ENCODE measurements at regions of chr20 and their contacts with region 1.

Region 1: GRCh38 chr20:36199345-36200257 is 36.7 kb upstream of the AAR2 start:
- DNase-seq: peak; percentile 85
- H3K4me3 ChIP-seq: no peak overlapping the region
- H3K27ac ChIP-seq: no peak overlapping the region
- H3K4me1 ChIP-seq: no peaks in the 10 kb centered on the region
- H3K27me3 ChIP-seq: no peaks in the 10 kb centered on the region
- CTCF ChIP-seq: peak; percentile 90

Region 2: GRCh38 chr20:35994994-35995453 is 204.6 kb before region 1 on chr20:
- intact Hi-C with region 1: loop called (anchors 5 kb)
- DNase-seq: peak; percentile 88
- H3K4me3 ChIP-seq: no peak overlapping the region
- H3K27ac ChIP-seq: no peak overlapping the region
- H3K4me1 ChIP-seq: no peaks in the 10 kb centered on the region
- H3K27me3 ChIP-seq: no peaks in the 10 kb centered on the region
- CTCF ChIP-seq: peak; percentile 93

Region 3: GRCh38 chr20:36093025-36093803 is 106.4 kb before region 1 on chr20:
- intact Hi-C with region 1: no loop called
- DNase-seq: peak; percentile 73
- H3K4me3 ChIP-seq: peak overlapping the region; percentile 69
- H3K27ac ChIP-seq: peak overlapping the region; percentile 86
- H3K4me1 ChIP-seq: peaks cover 18% of the 10 kb centered on the region
- H3K27me3 ChIP-seq: no peaks in the 10 kb centered on the region
- CTCF ChIP-seq: no peak

Region 4: GRCh38 chr20:36154700-36155628 is 44.6 kb before region 1 on chr20 and contains the start of gene EPB41L1:
- intact Hi-C with region 1: loop called (anchors 5 kb)
- DNase-seq: no peak
- H3K4me3 ChIP-seq: peak within 1 kb of the TSS; percentile 39
- H3K27ac ChIP-seq: no peak within 1 kb of the TSS
- H3K4me1 ChIP-seq: no peaks in the 10 kb centered on the region
- H3K27me3 ChIP-seq: no peaks in the 10 kb centered on the region
- CTCF ChIP-seq: no peak
- total RNA-seq, gene EPB41L1: 40.3 to 59.2 TPM

Region 5: GRCh38 chr20:36259177-36260061 is 59.8 kb after region 1 on chr20:
- intact Hi-C with region 1: no loop called
- DNase-seq: no peak
- H3K4me3 ChIP-seq: no peak overlapping the region
- H3K27ac ChIP-seq: no peak overlapping the region
- H3K4me1 ChIP-seq: no peaks in the 10 kb centered on the region
- H3K27me3 ChIP-seq: no peaks in the 10 kb centered on the region
- CTCF ChIP-seq: no peak

Region 6: GRCh38 chr20:36439040-36439730 is 239.6 kb after region 1 on chr20:
- intact Hi-C with region 1: loop called (anchors 5 kb)
- DNase-seq: peak; percentile 71
- H3K4me3 ChIP-seq: no peak overlapping the region
- H3K27ac ChIP-seq: no peak overlapping the region
- H3K4me1 ChIP-seq: no peaks in the 10 kb centered on the region
- H3K27me3 ChIP-seq: no peaks in the 10 kb centered on the region
- CTCF ChIP-seq: peak; percentile 85